Caco-2 (cell line): ENCODE measurements at regions of chr20 and their contacts with region 1.

Region 1: DNA sequence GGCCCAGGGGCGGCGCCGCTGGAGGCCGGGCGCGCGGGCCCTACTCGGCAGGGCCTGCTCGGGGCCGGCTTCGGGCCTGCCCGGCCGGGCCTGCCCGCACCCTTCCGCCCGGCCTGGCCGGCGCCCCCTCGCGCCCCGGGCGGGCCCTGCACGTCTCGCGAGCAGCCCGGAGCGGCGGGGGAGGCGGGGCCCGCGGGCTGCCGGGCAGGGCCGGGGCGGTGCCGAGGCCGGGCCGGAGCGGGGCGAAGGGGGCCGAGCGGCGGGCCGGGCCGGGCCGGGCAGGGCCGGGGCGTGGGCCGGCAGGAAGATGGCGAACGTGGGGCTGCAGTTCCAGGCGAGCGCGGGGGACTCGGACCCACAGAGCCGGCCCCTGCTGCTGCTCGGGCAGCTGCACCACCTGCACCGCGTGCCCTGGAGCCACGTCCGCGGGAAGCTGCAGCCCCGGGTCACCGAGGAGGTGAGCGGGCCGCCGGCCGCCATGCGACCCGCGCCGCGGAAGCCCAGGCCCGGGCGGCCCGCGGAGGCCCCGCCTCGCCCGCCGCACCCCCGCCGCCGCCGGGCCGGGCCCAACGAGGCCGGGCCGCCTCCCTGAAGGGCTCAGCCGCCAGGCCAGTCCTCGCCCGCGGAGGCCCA is at the start of gene NPEPL1:
- DNase-seq: peak; percentile 68 to 93
- H3K4me3 ChIP-seq: peak within 1 kb of the TSS; percentile 72
- H3K4me3 Mint-ChIP-seq: peak within 1 kb of the TSS; percentile 72
- H3K27ac Mint-ChIP-seq: peak within 1 kb of the TSS; percentile 57
- H3K4me1 ChIP-seq: peaks cover 18% of the 10 kb centered on the region
- H3K4me1 Mint-ChIP-seq: no peaks in the 10 kb centered on the region
- H3K27me3 ChIP-seq: no peaks in the 10 kb centered on the region
- H3K27me3 Mint-ChIP-seq: no peaks in the 10 kb centered on the region
- CTCF ChIP-seq: peak in 1 of 2 experiments; percentile 33
- total RNA-seq, gene NPEPL1: 32.9 and 41.9 TPM in 2 replicates

Region 2: DNA sequence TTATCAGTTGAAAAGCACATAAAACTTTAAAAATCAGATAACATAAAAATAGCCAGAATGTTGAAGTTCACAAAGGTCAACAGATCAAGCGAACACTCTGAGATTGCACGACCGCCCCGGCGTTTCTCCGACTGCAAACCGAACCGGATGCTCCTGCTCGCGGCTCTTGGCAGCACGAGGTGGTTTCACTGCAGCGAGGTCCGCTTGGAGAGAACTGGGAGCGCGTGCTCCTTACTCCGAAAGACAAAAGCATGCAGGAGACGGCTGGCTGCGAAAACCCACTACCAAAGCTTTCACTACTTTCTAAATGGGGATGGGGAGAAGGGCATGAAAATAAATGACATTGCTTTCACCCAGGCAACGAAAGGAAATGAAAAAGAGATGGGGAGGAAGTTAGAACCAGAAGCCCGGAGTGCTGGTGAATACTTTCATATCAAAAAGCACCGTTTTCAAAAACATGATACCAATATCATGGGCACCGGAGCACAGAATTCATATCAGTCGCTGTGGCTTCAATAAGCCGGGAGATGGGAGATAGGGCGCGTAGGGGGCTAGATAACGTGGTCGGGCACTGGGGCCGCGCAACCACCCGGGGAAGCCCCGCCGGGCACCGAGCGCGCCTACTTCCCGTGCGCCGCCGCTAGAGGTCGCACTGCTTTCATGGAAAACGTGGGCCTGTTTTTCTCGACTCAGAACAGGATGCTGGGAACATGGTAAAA is 455.9 kb before region 1 on chr20:
- CTCF ChIA-PET with region 1: no interaction called
- POLR2A ChIA-PET with region 1: no interaction called
- intact Hi-C with region 1: loop called (anchors 5 kb)
- DNase-seq: peak; percentile 77 to 92
- H3K4me3 ChIP-seq: peak overlapping the region; percentile 40
- H3K4me3 Mint-ChIP-seq: peak overlapping the region; percentile 83
- H3K27ac Mint-ChIP-seq: no peak overlapping the region
- H3K4me1 ChIP-seq: no peaks in the 10 kb centered on the region
- H3K4me1 Mint-ChIP-seq: peaks cover 5% of the 10 kb centered on the region
- H3K27me3 ChIP-seq: peaks cover 5% of the 10 kb centered on the region; the same call in 1 of the 2 replicates
- H3K27me3 Mint-ChIP-seq: peaks cover 33% of the 10 kb centered on the region
- CTCF ChIP-seq: peak; percentile 99 to 100